Pancreas (tissue), 10 donors: ENCODE measurements at regions of chr1 and their contacts with region 1.

Region 1: DNA sequence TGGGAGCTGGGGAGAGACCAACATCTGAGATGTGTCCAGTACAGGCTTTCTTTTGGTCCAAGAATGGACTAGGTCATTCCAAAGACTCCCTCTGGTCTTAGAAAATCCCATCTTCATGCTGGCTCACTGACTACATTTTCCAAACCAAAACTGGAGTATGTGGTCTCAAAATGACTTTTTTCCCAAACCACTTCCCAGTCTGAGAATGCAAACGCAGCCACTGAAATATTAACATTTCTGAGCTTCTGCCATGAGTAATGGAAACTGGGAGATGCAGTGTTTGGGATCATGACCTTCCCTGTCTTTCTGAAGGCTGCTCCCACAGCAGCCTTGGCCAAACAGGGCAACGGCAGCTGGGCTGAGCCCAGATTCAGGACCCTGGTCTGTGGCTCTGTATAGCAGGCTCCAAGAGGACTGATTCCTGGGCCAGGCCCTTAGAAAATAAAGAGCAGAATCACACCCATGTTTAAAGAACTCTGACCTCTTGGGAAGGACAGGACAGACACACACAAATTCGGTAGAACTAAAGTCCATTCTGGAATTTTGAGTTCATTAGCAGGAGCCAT is 62.1 kb upstream of the CNTN2 start:
- DNase-seq: no peak
- ATAC-seq: peak in 1 of 4 donors; percentile 43
- H3K4me3 ChIP-seq: no peak overlapping the region
- H3K27ac ChIP-seq: no peak overlapping the region
- H3K4me1 ChIP-seq: no peaks in the 10 kb centered on the region
- H3K27me3 ChIP-seq: no peaks in the 10 kb centered on the region
- CTCF ChIP-seq: no peak

Region 2: GRCh38 chr1:205056188-205056611 is 75.3 kb after region 1 on chr1:
- intact Hi-C with region 1: loop called in 1 of 3 experiments (anchors 5 kb)
- DNase-seq: peak in 1 of 6 donors; percentile 32
- ATAC-seq: no peak
- H3K4me3 ChIP-seq: no peak overlapping the region
- H3K27ac ChIP-seq: no peak overlapping the region
- H3K4me1 ChIP-seq: no peaks in the 10 kb centered on the region
- H3K27me3 ChIP-seq: no peaks in the 10 kb centered on the region
- CTCF ChIP-seq: no peak